CD8-positive, alpha-beta T cell (primary cell): ENCODE measurements at regions of chr1 and their contacts with region 1.

Region 1: DNA sequence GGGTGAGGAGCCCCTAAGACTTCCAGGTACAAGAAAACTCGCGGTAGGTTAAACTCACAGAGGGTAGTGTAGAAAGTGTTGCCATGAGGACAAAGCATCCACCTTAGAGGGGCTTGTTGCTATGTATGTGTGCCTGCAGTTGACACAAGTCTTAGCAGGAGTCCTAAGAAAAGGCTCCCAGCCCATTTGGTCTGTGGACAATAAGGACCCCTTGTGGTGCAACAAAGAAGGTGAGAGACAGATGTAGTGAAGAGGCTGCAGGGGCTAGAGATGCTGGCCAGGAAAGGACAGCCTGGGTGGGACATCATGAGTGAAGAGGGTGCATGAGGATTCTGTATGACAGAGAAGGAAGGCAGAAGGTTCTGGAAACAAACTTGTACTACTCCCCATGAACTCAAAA is 36.3 kb upstream of the IL10 start:
- DNase-seq: peak; percentile 16 to 87 (median 54)
- ATAC-seq: peak; percentile 91
- H3K4me3 ChIP-seq: no peak overlapping the region
- H3K4me3 Mint-ChIP-seq: no peak overlapping the region
- H3K27ac ChIP-seq: no peak overlapping the region
- H3K27ac Mint-ChIP-seq: peak overlapping the region; percentile 10
- H3K4me1 ChIP-seq: peaks cover 25% of the 10 kb centered on the region
- H3K4me1 Mint-ChIP-seq: peaks cover 42% of the 10 kb centered on the region
- H3K27me3 ChIP-seq: no peaks in the 10 kb centered on the region
- H3K27me3 Mint-ChIP-seq: no peaks in the 10 kb centered on the region
- CTCF ChIP-seq: peak; percentile 50

Region 2: GRCh38 chr1:206635080-206635977 is 173.3 kb before region 1 on chr1 and contains the start of gene DYRK3:
- CTCF ChIA-PET with region 1: no interaction called
- POLR2A ChIA-PET with region 1: no interaction called
- intact Hi-C with region 1: loop called in 1 of 2 experiments (anchors 2 kb)
- DNase-seq: peak; percentile 63 to 94 (median 88)
- ATAC-seq: peak; percentile 94
- H3K4me3 ChIP-seq: peak within 1 kb of the TSS; percentile 58 to 79
- H3K4me3 Mint-ChIP-seq: peak within 1 kb of the TSS; percentile 85
- H3K27ac ChIP-seq: peak within 1 kb of the TSS; percentile 9 to 12
- H3K27ac Mint-ChIP-seq: peak within 1 kb of the TSS; percentile 70
- H3K4me1 ChIP-seq: peaks cover 15% of the 10 kb centered on the region
- H3K4me1 Mint-ChIP-seq: peaks cover 16% of the 10 kb centered on the region
- H3K27me3 ChIP-seq: no peaks in the 10 kb centered on the region
- H3K27me3 Mint-ChIP-seq: peaks cover 15% of the 10 kb centered on the region
- CTCF ChIP-seq: no peak
- total RNA-seq, gene DYRK3: 0.94 to 1.4 TPM

Region 3: GRCh38 chr1:206744683-206745082 is 63.9 kb before region 1 on chr1:
- CTCF ChIA-PET with region 1: interaction called, 25 read pairs
- POLR2A ChIA-PET with region 1: interaction called, 5 read pairs
- intact Hi-C with region 1: loop called in 1 of 2 experiments (anchors 1 kb)
- DNase-seq: peak in 1 of 9 experiments; percentile 50
- ATAC-seq: peak; percentile 45
- H3K4me3 ChIP-seq: no peak overlapping the region
- H3K4me3 Mint-ChIP-seq: no peak overlapping the region
- H3K27ac ChIP-seq: no peak overlapping the region
- H3K27ac Mint-ChIP-seq: peak overlapping the region; percentile 46
- H3K4me1 ChIP-seq: peaks cover 11% of the 10 kb centered on the region
- H3K4me1 Mint-ChIP-seq: peaks cover 40% of the 10 kb centered on the region
- H3K27me3 ChIP-seq: no peaks in the 10 kb centered on the region
- H3K27me3 Mint-ChIP-seq: no peaks in the 10 kb centered on the region
- CTCF ChIP-seq: no peak

Region 4: DNA sequence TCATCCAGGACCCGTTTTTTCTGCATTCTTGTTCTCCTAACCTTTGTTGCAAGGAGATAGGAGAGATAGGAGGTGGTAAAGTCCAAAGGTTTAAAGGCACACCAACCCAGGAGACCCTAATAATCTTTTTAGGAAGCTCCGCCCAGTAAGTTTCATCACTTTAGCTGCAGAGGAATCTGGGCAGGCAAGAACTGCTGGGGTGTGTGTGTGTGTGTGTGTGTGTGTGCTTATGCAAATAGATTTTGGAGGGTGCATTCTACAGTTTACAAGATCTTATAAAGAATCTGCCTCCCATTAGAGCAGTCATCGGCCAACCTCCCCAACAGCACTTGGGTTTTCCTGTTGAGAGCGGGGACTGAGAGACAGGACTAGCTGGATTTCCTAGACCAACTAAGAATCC is 32.4 kb before region 1 on chr1:
- CTCF ChIA-PET with region 1: interaction called, 16 read pairs
- POLR2A ChIA-PET with region 1: interaction called, 4 read pairs
- intact Hi-C with region 1: no loop called
- DNase-seq: no peak
- ATAC-seq: no peak
- H3K4me3 ChIP-seq: no peak overlapping the region
- H3K4me3 Mint-ChIP-seq: no peak overlapping the region
- H3K27ac ChIP-seq: no peak overlapping the region
- H3K27ac Mint-ChIP-seq: no peak overlapping the region
- H3K4me1 ChIP-seq: peaks cover 34% of the 10 kb centered on the region
- H3K4me1 Mint-ChIP-seq: peaks cover 31% of the 10 kb centered on the region
- H3K27me3 ChIP-seq: no peaks in the 10 kb centered on the region
- H3K27me3 Mint-ChIP-seq: no peaks in the 10 kb centered on the region
- CTCF ChIP-seq: no peak

Region 5: DNA sequence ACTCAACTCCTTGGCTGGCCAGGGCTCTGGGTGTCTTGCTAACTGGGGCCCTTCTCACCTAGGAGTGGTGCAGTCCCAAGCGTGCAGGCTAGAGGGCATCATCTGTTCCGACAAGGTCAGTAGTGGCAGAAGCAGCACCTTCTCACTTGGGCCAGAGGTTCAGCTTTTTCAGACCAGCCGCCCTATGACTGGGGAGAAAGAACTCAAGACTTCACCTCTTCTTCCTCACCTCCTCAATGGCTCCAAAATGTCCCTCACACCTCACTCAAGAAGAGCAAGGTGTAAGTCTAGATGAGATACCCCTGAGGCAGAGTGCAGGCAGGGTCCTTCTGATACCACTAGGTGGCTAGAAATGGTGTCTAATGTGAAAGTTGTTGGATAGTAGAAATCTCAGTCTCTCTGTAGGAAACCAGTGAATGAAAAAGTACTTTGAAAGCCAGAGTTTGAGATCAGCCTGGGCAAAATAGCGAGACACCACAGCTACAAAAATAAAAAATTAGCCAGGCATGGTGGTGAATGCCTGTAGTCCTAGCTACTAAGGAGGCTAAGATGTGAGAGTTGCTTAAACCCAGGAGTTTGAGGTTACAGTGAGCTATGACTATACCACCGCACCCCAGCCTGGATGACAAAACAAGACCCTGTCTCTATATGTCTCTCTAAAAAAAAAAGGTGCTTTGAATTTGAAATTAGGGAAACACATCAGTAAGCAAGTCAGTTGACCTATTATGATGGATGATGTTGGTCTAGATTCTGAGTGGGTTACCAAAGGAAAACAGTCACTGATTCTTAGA is 48.3 kb after region 1 on chr1:
- CTCF ChIA-PET with region 1: interaction called, 7 read pairs
- POLR2A ChIA-PET with region 1: no interaction called
- intact Hi-C with region 1: loop called in 1 of 2 experiments (anchors 5 kb)
- DNase-seq: peak in 4 of 9 experiments; percentile 16 to 53 (median 28)
- ATAC-seq: peak; percentile 55
- H3K4me3 ChIP-seq: no peak overlapping the region
- H3K4me3 Mint-ChIP-seq: no peak overlapping the region
- H3K27ac ChIP-seq: no peak overlapping the region
- H3K27ac Mint-ChIP-seq: no peak overlapping the region
- H3K4me1 ChIP-seq: peaks cover 4% of the 10 kb centered on the region
- H3K4me1 Mint-ChIP-seq: peaks cover 13% of the 10 kb centered on the region
- H3K27me3 ChIP-seq: no peaks in the 10 kb centered on the region
- H3K27me3 Mint-ChIP-seq: no peaks in the 10 kb centered on the region
- CTCF ChIP-seq: peak; percentile 33

Region 6: DNA sequence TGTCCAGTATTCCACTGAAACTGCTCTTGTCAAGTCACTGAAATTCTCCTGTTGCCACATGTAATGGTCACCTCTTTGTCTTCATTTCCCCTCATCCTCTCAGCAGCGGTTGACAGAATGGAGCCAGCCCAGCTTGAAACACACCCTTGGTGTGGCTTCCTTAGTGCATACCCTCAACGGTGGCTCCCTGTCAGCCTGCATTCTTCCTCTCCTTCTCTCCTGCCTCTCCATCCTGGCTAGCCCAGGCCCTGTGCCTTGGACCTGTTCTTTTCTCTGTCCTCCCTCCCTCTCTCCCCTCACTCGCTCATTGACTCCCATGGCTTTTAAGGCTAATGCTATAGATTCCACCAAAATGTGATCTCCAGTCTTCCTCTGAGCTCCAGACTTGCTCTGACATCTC is 109.5 kb after region 1 on chr1:
- CTCF ChIA-PET with region 1: interaction called, 106 read pairs
- POLR2A ChIA-PET with region 1: interaction called, 14 read pairs
- intact Hi-C with region 1: loop called in 1 of 2 experiments (anchors 5 kb)
- DNase-seq: no peak
- ATAC-seq: no peak
- H3K4me3 ChIP-seq: peak overlapping the region; percentile 90 to 99
- H3K4me3 Mint-ChIP-seq: no peak overlapping the region
- H3K27ac ChIP-seq: peak overlapping the region; percentile 46 to 95
- H3K27ac Mint-ChIP-seq: peak overlapping the region; percentile 97
- H3K4me1 ChIP-seq: peaks cover 57% of the 10 kb centered on the region
- H3K4me1 Mint-ChIP-seq: peaks cover 76% of the 10 kb centered on the region
- H3K27me3 ChIP-seq: no peaks in the 10 kb centered on the region
- H3K27me3 Mint-ChIP-seq: no peaks in the 10 kb centered on the region
- CTCF ChIP-seq: no peak